Heart right ventricle (tissue), 16 donors: ENCODE measurements at regions of chr16 and their contacts with region 1.

Region 1: GRCh38 chr16:82755569-82756282 is 129.0 kb downstream of the CDH13 start:
- DNase-seq: no peak
- ATAC-seq: no peak
- H3K4me3 ChIP-seq: no peak overlapping the region
- H3K27ac ChIP-seq: peak overlapping the region in 4 of 10 donors; percentile 18 to 57 (median 42)
- H3K4me1 ChIP-seq: peaks cover 5 to 53% (median 31%) of the 10 kb centered on the region in 9 donors
- H3K27me3 ChIP-seq: no peaks in the 10 kb centered on the region
- CTCF ChIP-seq: no peak

Region 2: DNA sequence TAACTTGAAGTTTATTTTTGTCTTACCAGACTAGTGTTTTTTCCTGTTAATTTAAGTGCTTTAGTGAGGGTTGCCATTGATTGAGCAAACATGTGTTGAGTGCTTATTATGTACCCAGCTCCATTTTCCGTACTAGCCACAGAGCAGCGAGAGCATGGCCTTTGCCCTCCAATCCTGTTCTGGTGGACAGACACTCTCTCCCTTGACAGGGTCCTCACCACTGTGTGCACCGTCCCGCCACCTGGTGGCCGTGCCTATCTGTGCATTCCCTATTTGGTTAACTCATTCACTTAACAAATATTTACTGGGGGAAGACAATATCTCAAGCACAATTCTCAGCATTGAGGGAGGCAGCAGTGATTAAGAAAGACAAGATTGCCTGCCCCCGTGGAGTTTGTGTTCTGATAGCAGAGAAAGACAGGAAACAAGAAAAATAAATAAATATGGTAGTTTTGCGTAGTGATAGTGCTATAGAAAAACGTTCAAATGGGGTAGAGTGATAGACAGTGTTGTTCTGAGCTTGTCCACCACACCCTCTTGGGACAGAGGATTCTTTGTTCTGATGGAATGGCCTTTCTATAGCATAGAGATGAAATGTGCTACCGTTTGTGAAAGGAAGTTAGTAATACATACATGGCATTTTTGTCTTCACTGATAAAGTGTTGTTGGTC is 115.9 kb before region 1 on chr16:
- intact Hi-C with region 1: no loop called
- DNase-seq: peak; percentile 55 to 65
- ATAC-seq: peak; percentile 41 to 77 (median 62)
- H3K4me3 ChIP-seq: no peak overlapping the region
- H3K27ac ChIP-seq: peak overlapping the region in 3 of 10 donors; percentile 58 to 76 (median 71)
- H3K4me1 ChIP-seq: peaks cover 4 to 73% (median 33%) of the 10 kb centered on the region in 9 donors
- H3K27me3 ChIP-seq: no peaks in the 10 kb centered on the region
- CTCF ChIP-seq: peak; percentile 57 to 82 (median 69)

Region 3: GRCh38 chr16:82782715-82783251 is 27.1 kb after region 1 on chr16:
- intact Hi-C with region 1: no loop called
- DNase-seq: peak; percentile 21 to 24
- ATAC-seq: peak; percentile 44 to 78 (median 70)
- H3K4me3 ChIP-seq: no peak overlapping the region
- H3K27ac ChIP-seq: peak overlapping the region in 8 of 10 donors; percentile 5 to 56 (median 39)
- H3K4me1 ChIP-seq: peaks cover 4 to 47% (median 26%) of the 10 kb centered on the region in 9 donors
- H3K27me3 ChIP-seq: no peaks in the 10 kb centered on the region
- CTCF ChIP-seq: no peak

Region 4: GRCh38 chr16:82995924-82996441 is 240.3 kb after region 1 on chr16:
- intact Hi-C with region 1: loop called in 1 of 10 experiments (anchors 10 kb)
- DNase-seq: peak in 1 of 2 donors; percentile 33
- ATAC-seq: peak in 7 of 8 donors; percentile 69 to 92 (median 87)
- H3K4me3 ChIP-seq: peak overlapping the region in 6 of 10 donors; percentile 5 to 32 (median 21)
- H3K27ac ChIP-seq: peak overlapping the region in 8 of 10 donors; percentile 30 to 69 (median 61)
- H3K4me1 ChIP-seq: peaks cover 0 to 21% (median 6%) of the 10 kb centered on the region in 9 donors
- H3K27me3 ChIP-seq: no peaks in the 10 kb centered on the region
- CTCF ChIP-seq: no peak

Region 5: DNA sequence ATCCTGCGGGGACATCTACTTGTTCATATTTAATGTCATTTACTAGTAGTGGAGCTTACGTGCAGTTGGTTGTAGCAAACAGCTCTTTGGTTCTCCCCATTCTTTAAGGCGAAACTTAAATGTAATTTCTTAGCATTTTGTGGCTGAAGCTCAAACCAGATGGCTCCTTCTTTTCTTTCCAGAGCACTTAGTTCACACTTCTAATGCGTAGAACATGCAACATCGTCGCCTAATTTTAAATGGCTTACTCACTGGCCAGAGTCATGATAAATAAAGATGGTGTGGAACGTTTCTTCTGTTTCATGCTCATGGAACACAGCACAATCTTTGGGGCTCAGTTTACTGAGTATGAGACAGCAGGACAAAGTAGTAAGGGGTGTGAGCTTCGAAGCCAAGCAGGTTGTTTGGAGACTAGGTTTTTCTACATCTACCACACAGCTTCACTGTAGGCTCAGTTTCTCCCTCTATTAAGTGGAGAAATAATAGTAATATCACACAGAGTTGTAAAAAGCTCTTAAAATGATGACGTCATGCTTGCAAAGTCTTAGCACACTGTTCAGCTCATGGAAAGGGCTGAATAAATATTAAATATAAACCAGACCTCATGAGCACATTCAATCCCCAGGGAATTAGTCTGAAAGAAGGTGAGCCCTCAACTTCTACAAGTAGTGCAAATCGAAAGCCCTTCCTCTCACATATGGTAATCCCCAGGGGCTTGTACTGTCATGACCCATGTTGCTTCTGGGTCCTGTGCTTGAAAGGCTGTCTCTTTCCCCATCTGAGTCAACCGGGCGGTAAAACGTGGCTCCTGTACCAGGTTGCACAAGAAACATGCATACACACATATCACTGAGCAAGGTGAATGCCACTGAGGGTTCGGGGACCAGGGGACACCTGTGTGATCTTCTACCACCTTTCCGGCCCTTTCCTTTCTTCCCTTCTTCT is 255.3 kb after region 1 on chr16:
- intact Hi-C with region 1: loop called in 1 of 10 experiments (anchors 5 kb)
- DNase-seq: no peak
- ATAC-seq: no peak
- H3K4me3 ChIP-seq: no peak overlapping the region
- H3K27ac ChIP-seq: no peak overlapping the region
- H3K4me1 ChIP-seq: peaks cover 0 to 6% (median 0%) of the 10 kb centered on the region in 9 donors
- H3K27me3 ChIP-seq: no peaks in the 10 kb centered on the region
- CTCF ChIP-seq: no peak

Region 6: DNA sequence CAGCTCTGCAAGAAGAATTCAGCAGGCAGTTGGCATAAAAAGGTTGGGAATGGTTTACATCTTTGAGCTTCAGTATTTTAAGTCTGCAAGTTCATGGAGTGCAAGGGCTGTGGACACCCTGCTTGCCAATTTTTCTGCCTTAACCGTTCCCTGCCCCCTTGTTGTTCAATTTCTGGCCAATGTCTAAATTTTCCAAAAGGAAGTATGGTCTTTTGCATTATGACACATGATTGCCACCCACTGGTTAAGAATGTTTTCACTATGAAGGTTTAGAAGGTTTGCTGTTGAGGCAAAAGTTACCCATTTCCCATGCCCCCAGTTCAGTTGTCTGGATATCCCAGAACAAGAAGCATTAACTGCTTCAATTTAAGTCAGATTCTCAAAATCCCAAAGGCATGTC is 313.0 kb after region 1 on chr16:
- intact Hi-C with region 1: no loop called
- DNase-seq: peak in 1 of 2 donors; percentile 4
- ATAC-seq: peak in 1 of 8 donors; percentile 25
- H3K4me3 ChIP-seq: no peak overlapping the region
- H3K27ac ChIP-seq: no peak overlapping the region
- H3K4me1 ChIP-seq: peaks cover 0 to 9% (median 1%) of the 10 kb centered on the region in 9 donors
- H3K27me3 ChIP-seq: no peaks in the 10 kb centered on the region
- CTCF ChIP-seq: peak in 7 of 9 donors; percentile 15 to 59 (median 36)